ENCODE measurements at regions of chr9 and their contacts with region 1.

Region 1: DNA sequence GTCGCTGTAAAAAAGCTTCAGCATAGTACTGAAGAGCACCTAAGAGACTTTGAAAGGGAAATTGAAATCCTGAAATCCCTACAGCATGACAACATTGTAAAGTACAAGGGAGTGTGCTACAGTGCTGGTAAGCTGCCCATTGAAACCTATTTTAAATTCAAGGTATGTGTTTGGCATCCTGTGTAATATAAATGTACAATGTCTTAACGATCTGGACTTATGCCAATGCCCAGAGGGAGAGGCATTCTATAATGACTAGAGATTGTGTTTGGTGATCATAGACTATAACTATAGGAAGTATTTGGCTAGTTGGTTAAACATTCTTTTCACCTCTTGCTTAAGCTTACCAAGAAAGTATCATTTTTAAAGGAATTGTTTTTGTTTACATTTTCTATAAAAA is 95.7 kb downstream of the INSL6 start:
- H3K4me3 Mint-ChIP-seq: no peak overlapping the region
- H3K27ac Mint-ChIP-seq: no peak overlapping the region
- H3K4me1 Mint-ChIP-seq: no peaks in the 10 kb centered on the region
- H3K27me3 Mint-ChIP-seq: no peaks in the 10 kb centered on the region

Region 2: DNA sequence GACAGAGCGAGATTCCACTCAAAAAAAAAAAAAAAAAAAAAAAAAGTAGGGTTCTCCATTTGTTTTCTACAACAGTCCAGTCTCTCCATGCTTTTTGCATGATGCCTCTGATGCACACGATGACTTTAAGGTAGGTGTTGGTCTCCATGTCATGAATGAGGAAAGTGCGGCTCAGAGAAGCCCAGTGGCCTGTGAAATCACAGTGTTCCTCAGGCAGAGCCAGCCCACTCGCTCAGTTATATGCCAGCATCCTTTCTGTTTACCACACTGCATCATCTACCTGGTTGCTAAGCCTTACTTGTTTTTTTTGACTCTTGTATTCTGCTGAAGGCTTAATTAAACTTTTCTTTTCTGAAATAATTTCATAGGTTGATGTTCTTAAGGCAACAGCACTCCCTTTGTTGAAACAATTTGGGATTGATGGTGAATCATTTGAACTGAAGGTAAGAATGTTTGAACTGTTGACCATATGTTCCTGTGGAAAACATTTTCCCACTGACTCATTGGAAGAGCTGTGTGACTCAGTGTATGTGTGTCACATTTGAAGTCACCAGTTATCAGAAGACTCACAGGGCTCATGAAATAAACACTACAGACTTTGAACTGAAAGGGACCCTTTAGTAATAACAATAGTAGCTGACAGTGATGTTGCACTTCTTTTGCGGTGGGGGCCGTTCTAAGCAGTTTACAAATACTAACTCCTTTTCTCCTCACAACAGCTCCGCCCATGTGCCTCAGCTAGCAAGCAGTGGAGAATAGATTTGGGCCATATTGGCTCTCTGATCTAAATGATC is 256.8 kb before region 1 on chr9:
- intact Hi-C with region 1: no loop called
- H3K4me3 Mint-ChIP-seq: no peak overlapping the region
- H3K27ac Mint-ChIP-seq: no peak overlapping the region
- H3K4me1 Mint-ChIP-seq: peaks cover 8% of the 10 kb centered on the region
- H3K27me3 Mint-ChIP-seq: no peaks in the 10 kb centered on the region

Region 3: DNA sequence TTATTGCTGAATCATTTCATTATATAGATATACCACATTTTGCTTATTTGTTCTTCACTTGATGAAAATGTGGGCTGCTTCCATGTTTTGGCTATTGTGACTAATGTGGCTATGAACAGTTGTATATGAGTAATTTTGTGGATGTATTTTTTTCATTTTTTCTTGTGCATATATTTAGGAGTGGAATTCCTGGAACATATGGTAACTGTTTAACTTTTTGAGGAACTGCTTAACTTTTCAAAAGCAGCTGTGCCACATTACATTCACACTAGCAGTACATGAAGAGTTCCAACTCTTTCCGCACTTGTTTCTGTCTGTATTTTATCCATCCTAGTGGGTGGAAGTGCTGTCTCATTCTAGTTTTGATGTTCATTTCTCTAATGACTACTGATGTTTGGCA is 36.9 kb before region 1 on chr9:
- intact Hi-C with region 1: loop called (anchors 5 kb)
- H3K4me3 Mint-ChIP-seq: no peak overlapping the region
- H3K27ac Mint-ChIP-seq: no peak overlapping the region
- H3K4me1 Mint-ChIP-seq: peaks cover 7% of the 10 kb centered on the region
- H3K27me3 Mint-ChIP-seq: no peaks in the 10 kb centered on the region